Activated CD8-positive, alpha-beta memory T cell treated with anti-CD3 and anti-CD28 coated beads, Interleukin-2, amount 10 ng/mL, durations not matched to agents 7 days and 5 days (primary cell): ENCODE measurements at regions of chr17 and their contacts with region 1.

Region 1: GRCh38 chr17:49567871-49568694 is 7.6 kb upstream of the NXPH3 start:
- DNase-seq: peak; percentile 90
- ATAC-seq: peak; percentile 61
- H3K4me3 Mint-ChIP-seq: peak overlapping the region; percentile 63
- H3K27ac Mint-ChIP-seq: no peak overlapping the region
- H3K4me1 Mint-ChIP-seq: peaks cover 38% of the 10 kb centered on the region
- H3K27me3 Mint-ChIP-seq: peaks cover 51% of the 10 kb centered on the region

Region 2: DNA sequence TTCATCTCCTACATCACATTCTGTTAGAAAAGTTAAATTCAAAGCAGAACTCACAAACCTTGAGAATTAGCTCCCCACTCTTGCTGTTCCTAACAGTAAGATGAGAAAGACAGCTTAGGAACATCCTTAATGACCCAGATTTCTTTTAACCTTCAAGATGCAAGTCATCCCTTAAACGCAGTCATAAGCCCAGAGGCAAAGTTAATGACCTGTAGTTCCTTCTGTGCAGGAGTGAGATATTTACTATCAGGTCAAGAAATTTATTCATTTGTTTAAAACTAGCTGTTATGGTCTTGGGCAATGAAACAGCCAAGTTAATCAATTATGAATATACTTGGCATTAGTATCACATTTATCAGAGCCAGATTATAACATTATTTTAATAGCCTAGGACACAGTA is 44.6 kb after region 1 on chr17:
- CTCF ChIA-PET with region 1: interaction called, 12 read pairs
- DNase-seq: no peak
- ATAC-seq: no peak
- H3K4me3 Mint-ChIP-seq: no peak overlapping the region
- H3K27ac Mint-ChIP-seq: no peak overlapping the region
- H3K4me1 Mint-ChIP-seq: no peaks in the 10 kb centered on the region
- H3K27me3 Mint-ChIP-seq: no peaks in the 10 kb centered on the region

Region 3: DNA sequence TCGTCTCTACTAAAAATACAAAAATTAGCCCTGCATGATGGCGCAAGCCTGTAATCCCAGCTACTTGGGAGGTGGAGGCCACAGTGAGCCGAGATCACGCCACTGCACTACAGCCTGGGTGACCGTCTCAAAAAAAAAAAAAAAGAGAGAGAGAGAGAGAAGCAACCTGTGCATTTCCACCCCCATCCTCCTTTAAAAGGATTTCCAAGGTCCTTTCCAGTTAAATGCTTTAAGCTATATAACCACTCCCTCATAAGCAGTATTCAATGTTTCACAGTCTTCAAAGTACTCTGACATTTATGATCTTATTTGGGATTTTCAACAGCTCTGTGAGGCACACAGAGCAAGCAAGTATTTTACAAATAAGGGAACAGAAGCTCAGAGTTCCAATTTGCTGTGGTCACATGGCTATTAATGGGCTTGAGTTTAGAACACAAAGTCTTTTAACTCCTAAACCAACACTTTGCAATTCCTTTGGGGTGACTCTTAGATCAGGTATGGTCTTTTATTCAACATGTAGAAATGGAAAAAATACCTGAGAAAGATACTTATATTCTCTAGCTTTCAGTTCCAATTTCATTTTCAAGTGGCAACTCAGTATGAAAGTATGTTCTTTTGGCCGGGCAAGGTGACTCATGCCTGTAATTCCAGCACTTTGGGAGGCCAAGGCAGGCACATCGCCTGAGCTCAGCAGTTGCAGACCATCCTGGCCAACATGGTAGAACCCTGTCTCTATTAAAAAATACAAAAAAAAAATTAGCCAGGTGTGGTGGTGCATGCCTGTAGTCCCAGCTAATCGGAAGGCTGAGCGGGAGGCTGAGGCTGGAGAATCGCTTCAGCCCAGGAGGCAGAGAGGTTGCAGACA is 78.5 kb after region 1 on chr17:
- CTCF ChIA-PET with region 1: interaction called, 12 read pairs
- DNase-seq: peak; percentile 72
- ATAC-seq: peak; percentile 91
- H3K4me3 Mint-ChIP-seq: peak overlapping the region; percentile 47
- H3K27ac Mint-ChIP-seq: peak overlapping the region; percentile 78
- H3K4me1 Mint-ChIP-seq: peaks cover 29% of the 10 kb centered on the region
- H3K27me3 Mint-ChIP-seq: no peaks in the 10 kb centered on the region

Region 4: GRCh38 chr17:49670002-49670401 is 101.9 kb after region 1 on chr17:
- CTCF ChIA-PET with region 1: interaction called, 13 read pairs
- DNase-seq: no peak
- ATAC-seq: no peak
- H3K4me3 Mint-ChIP-seq: no peak overlapping the region
- H3K27ac Mint-ChIP-seq: no peak overlapping the region
- H3K4me1 Mint-ChIP-seq: peaks cover 25% of the 10 kb centered on the region
- H3K27me3 Mint-ChIP-seq: no peaks in the 10 kb centered on the region

Region 5: GRCh38 chr17:49677933-49678847 is 110.1 kb after region 1 on chr17 and contains the start of gene SPOP:
- CTCF ChIA-PET with region 1: interaction called, 12 read pairs
- DNase-seq: peak; percentile 100
- ATAC-seq: peak; percentile 89
- H3K4me3 Mint-ChIP-seq: peak within 1 kb of the TSS; percentile 88
- H3K27ac Mint-ChIP-seq: peak within 1 kb of the TSS; percentile 96
- H3K4me1 Mint-ChIP-seq: peaks cover 37% of the 10 kb centered on the region
- H3K27me3 Mint-ChIP-seq: peaks cover 5% of the 10 kb centered on the region
- total RNA-seq, gene SPOP: 49.7 to 51.5 TPM

Region 6: GRCh38 chr17:49851387-49852291 is 283.6 kb after region 1 on chr17:
- CTCF ChIA-PET with region 1: interaction called, 14 read pairs
- DNase-seq: peak; percentile 75
- ATAC-seq: peak; percentile 79
- H3K4me3 Mint-ChIP-seq: peak overlapping the region; percentile 79
- H3K27ac Mint-ChIP-seq: peak overlapping the region; percentile 80
- H3K4me1 Mint-ChIP-seq: peaks cover 13% of the 10 kb centered on the region
- H3K27me3 Mint-ChIP-seq: peaks cover 18% of the 10 kb centered on the region